Brain microvascular endothelial cell (primary cell): ENCODE measurements at regions of chr6 and their contacts with region 1.

Region 1: GRCh38 chr6:124870611-124871459 is 91.4 kb upstream of the RNF217 start:
- DNase-seq: peak; percentile 30
- H3K4me3 ChIP-seq: no peak overlapping the region
- H3K27ac ChIP-seq: peak overlapping the region; percentile 32
- H3K27me3 ChIP-seq: no peaks in the 10 kb centered on the region
- CTCF ChIP-seq: peak; percentile 65

Region 2: DNA sequence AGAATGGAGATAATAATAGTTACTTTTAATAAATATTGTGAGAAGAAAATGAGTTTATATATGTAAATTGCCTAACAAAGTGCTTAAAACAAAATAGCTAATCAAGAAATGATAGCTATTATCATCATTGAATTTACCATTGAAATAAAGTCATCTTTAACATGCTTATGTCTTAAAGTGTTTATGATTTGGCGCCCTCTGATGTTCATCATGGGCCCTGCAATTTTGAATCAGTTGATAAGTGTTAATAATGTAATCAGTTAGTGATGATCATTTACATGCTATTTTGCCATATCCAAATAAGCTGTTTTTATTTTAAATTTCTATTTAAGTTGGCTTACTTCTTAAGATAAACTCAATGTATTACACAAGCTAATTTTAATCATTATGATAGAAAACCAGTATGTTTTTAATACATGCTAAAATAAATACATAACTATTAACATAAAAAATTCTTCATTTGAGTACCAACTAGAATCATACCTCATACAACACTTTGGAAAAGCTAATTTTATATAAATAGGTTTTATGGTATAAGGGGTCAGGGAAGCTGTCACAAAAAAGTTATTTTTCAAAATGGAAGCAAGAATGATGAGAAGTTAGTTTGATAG is 243.5 kb after region 1 on chr6:
- in situ Hi-C with region 1: loop called (anchors 10 kb)
- DNase-seq: peak; percentile 57
- H3K4me3 ChIP-seq: no peak overlapping the region
- H3K27ac ChIP-seq: no peak overlapping the region
- H3K27me3 ChIP-seq: no peaks in the 10 kb centered on the region
- CTCF ChIP-seq: peak; percentile 65